ENCODE measurements at regions of chr20 and their contacts with region 1.

Region 1: DNA sequence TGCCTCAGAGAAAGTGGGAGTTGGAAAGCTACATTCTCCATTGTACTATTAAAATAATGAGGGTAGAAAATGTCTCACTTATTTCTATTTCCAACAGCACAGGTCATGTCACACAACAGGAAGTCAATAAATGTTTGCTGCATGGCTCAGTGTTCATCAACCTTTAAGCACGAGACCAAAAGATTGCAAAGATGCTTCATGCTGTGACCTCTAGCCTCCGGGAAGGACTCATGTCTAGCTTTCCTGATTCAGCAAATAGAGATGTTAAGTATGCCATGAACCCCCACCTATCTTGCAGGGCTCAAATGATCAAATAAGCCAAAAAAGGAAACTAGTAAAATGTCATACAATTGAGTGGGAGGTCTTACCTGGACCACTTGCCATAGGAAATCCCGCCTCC is 57.4 kb downstream of the NCOA6 start:
- DNase-seq: no peak
- ATAC-seq: no peak
- H3K4me3 Mint-ChIP-seq: no peak overlapping the region
- H3K27ac Mint-ChIP-seq: no peak overlapping the region
- H3K4me1 Mint-ChIP-seq: no peaks in the 10 kb centered on the region
- H3K27me3 Mint-ChIP-seq: no peaks in the 10 kb centered on the region
- CTCF ChIP-seq: no peak

Region 2: GRCh38 chr20:34538671-34539123 is 229.4 kb before region 1 on chr20:
- CTCF ChIA-PET with region 1: interaction called, 22 read pairs
- POLR2A ChIA-PET with region 1: no interaction called
- intact Hi-C with region 1: no loop called
- DNase-seq: peak; percentile 72
- ATAC-seq: peak; percentile 85
- H3K4me3 Mint-ChIP-seq: no peak overlapping the region
- H3K27ac Mint-ChIP-seq: no peak overlapping the region
- H3K4me1 Mint-ChIP-seq: peaks cover 7% of the 10 kb centered on the region
- H3K27me3 Mint-ChIP-seq: no peaks in the 10 kb centered on the region
- CTCF ChIP-seq: peak; percentile 83

Region 3: GRCh38 chr20:34639755-34640222 is 128.3 kb before region 1 on chr20:
- CTCF ChIA-PET with region 1: no interaction called
- POLR2A ChIA-PET with region 1: no interaction called
- intact Hi-C with region 1: no loop called
- DNase-seq: no peak
- ATAC-seq: no peak
- H3K4me3 Mint-ChIP-seq: no peak overlapping the region
- H3K27ac Mint-ChIP-seq: no peak overlapping the region
- H3K4me1 Mint-ChIP-seq: no peaks in the 10 kb centered on the region
- H3K27me3 Mint-ChIP-seq: no peaks in the 10 kb centered on the region
- CTCF ChIP-seq: no peak

Region 4: GRCh38 chr20:34753706-34754461 is 14.2 kb before region 1 on chr20:
- CTCF ChIA-PET with region 1: interaction called, 52 read pairs
- POLR2A ChIA-PET with region 1: no interaction called
- intact Hi-C with region 1: no loop called
- DNase-seq: no peak
- ATAC-seq: no peak
- H3K4me3 Mint-ChIP-seq: no peak overlapping the region
- H3K27ac Mint-ChIP-seq: no peak overlapping the region
- H3K4me1 Mint-ChIP-seq: no peaks in the 10 kb centered on the region
- H3K27me3 Mint-ChIP-seq: no peaks in the 10 kb centered on the region
- CTCF ChIP-seq: no peak

Region 5: DNA sequence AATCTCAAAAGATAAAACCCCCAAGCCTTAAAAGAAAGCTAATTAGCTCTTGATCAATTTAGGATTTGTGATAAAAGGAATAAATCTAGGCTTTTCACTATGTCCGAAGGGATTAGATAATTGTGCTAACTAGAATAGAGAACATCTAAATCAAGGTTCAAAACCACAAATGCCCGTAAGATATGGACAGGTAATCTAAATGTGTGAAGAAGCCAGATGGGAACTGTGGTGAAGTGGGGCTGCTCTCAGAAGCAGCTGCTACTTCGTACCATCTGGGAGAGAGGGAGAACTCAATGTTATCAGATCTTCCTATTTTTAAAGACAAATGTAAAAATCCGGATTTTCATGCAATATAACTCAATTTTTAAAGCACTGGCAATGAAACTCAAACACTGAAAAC is 13.1 kb after region 1 on chr20:
- CTCF ChIA-PET with region 1: interaction called, 38 read pairs
- POLR2A ChIA-PET with region 1: no interaction called
- intact Hi-C with region 1: no loop called
- DNase-seq: no peak
- ATAC-seq: no peak
- H3K4me3 Mint-ChIP-seq: no peak overlapping the region
- H3K27ac Mint-ChIP-seq: no peak overlapping the region
- H3K4me1 Mint-ChIP-seq: no peaks in the 10 kb centered on the region
- H3K27me3 Mint-ChIP-seq: no peaks in the 10 kb centered on the region
- CTCF ChIP-seq: no peak

Region 6: GRCh38 chr20:34797012-34797995 is 29.2 kb after region 1 on chr20:
- CTCF ChIA-PET with region 1: interaction called, 11 read pairs
- POLR2A ChIA-PET with region 1: no interaction called
- intact Hi-C with region 1: no loop called
- DNase-seq: no peak
- ATAC-seq: no peak
- H3K4me3 Mint-ChIP-seq: no peak overlapping the region
- H3K27ac Mint-ChIP-seq: no peak overlapping the region
- H3K4me1 Mint-ChIP-seq: peaks cover 25% of the 10 kb centered on the region
- H3K27me3 Mint-ChIP-seq: no peaks in the 10 kb centered on the region
- CTCF ChIP-seq: no peak

Region 7: DNA sequence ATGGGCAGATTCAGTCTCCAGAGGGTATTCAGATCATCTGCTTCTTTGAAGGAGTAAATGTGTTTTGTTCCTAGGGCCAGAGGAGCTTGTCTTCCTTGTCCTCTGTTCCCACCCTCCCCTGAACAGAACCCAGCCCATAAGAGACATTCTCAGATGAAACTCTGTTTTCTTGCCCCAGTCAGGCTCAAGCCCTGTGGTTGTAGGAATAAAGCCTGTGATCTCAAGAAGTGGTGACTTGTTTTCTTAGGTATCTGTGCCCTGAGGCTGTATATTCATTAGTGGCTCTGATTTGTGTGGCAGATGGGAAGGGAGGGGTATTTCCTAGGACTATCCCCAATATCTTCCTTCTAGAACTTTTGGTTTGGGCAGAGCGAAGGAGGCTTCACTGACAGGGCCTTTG is 159.6 kb after region 1 on chr20:
- CTCF ChIA-PET with region 1: no interaction called
- POLR2A ChIA-PET with region 1: no interaction called
- intact Hi-C with region 1: no loop called
- DNase-seq: no peak
- ATAC-seq: no peak
- H3K4me3 Mint-ChIP-seq: no peak overlapping the region
- H3K27ac Mint-ChIP-seq: no peak overlapping the region
- H3K4me1 Mint-ChIP-seq: peaks cover 8% of the 10 kb centered on the region
- H3K27me3 Mint-ChIP-seq: no peaks in the 10 kb centered on the region
- CTCF ChIP-seq: no peak

Measured in activated CD8-positive, alpha-beta T cell treated with anti-CD3 and anti-CD28 coated beads for 36 hours (primary cell).